ENCODE measurements at regions of chr18 and their contacts with region 1.

Region 1: DNA sequence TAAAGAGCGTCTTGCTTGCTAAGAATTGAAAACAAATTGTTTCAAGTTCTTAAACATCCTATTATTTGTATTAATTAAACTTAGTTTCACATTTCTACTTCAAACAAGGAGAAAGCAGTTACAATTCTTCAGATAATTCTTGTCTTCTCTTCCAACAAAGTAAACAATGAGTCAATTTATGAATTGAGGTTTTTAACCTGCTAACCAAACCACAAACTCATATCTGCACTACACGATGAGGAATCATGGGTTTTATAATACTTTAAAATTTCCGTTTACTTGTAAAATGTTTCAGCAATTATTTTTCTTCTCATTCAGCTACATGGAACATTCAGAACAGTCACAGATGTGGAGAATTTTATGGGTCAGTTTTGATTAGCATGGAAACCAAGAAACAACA is 114.2 kb downstream of the SPIRE1 start:
- DNase-seq: no peak
- ATAC-seq: no peak
- H3K4me3 Mint-ChIP-seq: no peak overlapping the region
- H3K27ac Mint-ChIP-seq: no peak overlapping the region
- H3K4me1 Mint-ChIP-seq: 0 out of 2 replicates have a peak, but pooled peaks cover 2% of the 10 kb centered on the region
- H3K27me3 Mint-ChIP-seq: peaks cover 2% of the 10 kb centered on the region; the same call in 1 of the 2 replicates
- CTCF ChIP-seq: no peak

Region 2: GRCh38 chr18:12657684-12658425 is 114.2 kb after region 1 on chr18 and contains the start of gene SPIRE1:
- CTCF ChIA-PET with region 1: interaction called, 12 read pairs
- POLR2A ChIA-PET with region 1: no interaction called
- DNase-seq: peak; percentile 60
- ATAC-seq: peak; percentile 84
- H3K4me3 Mint-ChIP-seq: peak within 1 kb of the TSS; percentile 90
- H3K27ac Mint-ChIP-seq: peak within 1 kb of the TSS; percentile 94
- H3K4me1 Mint-ChIP-seq: peaks cover 36% of the 10 kb centered on the region
- H3K27me3 Mint-ChIP-seq: peaks cover 23% of the 10 kb centered on the region
- CTCF ChIP-seq: no peak
- total RNA-seq, gene SPIRE1: 13.5 to 19.3 TPM (median 15.5 TPM) in 3 replicates

Measured in WTC11 (cell line).